ENCODE measurements at regions of chr6 and their contacts with region 1.

Region 1: GRCh38 chr6:139549561-139550070 is 175.2 kb upstream of the CITED2 start:
- DNase-seq: no peak
- H3K4me3 ChIP-seq: no peak overlapping the region
- H3K27ac ChIP-seq: no peak overlapping the region
- H3K4me1 ChIP-seq: no peaks in the 10 kb centered on the region
- H3K27me3 ChIP-seq: no peaks in the 10 kb centered on the region
- CTCF ChIP-seq: no peak
- EP300 ChIP-seq: no peak
- POLR2A ChIP-seq: no peak

Region 2: GRCh38 chr6:139940741-139941729 is 391.4 kb after region 1 on chr6:
- intact Hi-C with region 1: loop called in 1 of 4 experiments (anchors 10 kb)
- DNase-seq: no peak
- H3K4me3 ChIP-seq: no peak overlapping the region
- H3K27ac ChIP-seq: no peak overlapping the region
- H3K4me1 ChIP-seq: peaks cover 5% of the 10 kb centered on the region
- H3K27me3 ChIP-seq: no peaks in the 10 kb centered on the region
- CTCF ChIP-seq: no peak
- EP300 ChIP-seq: no peak
- POLR2A ChIP-seq: no peak

Measured in ovary (tissue), 10 donors.